ENCODE measurements at regions of chr9 and their contacts with region 1.

Region 1: DNA sequence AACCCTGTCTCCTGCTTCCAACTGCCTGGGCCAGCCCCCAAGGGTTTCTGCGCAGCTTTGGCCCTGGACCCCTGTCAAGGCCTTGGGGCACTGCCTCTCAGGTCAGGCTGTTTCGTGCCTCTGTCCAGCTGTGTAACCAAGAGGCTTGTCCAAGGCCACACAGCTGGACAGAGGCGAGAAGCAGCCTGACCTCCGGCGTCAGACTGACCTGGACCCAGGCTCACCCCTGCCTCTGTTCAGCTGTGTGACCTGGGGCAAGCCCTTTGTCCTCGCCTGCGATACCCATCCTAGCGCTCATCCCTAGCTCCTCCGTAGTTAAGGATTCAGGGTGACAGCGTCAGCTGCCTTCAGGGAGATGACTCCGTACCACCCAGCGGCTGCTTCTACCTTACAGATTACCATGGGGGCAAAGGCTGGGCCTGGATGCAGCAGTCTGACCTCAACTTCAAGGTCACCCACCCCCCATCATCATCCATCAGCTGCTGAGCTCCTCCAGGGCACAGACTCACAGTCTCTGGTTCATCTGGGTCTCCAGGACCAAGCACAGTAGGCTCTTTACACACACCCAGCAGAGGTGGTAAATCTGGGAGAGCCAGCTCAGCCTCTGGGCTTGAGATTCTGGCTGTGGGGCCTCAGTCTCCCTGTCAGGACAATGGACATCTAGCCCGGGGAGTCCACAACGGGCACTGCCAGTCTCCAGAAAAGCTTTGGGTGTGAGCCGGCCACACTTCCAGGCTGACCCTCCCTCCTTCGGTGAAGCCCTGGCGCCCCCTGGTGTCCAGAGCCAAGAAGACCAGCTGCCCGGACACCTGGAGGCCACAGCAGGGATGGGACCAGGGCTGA is 7.9 kb downstream of the AK1 start:
- DNase-seq: peak; percentile 81 to 96
- ATAC-seq: peak; percentile 88 to 97
- H3K4me3 ChIP-seq: no peak overlapping the region
- H3K27ac ChIP-seq: peak overlapping the region in 1 of 2 experiments; percentile 45; a peak in 1 of 6 replicates
- H3K4me1 ChIP-seq: peaks cover 7% of the 10 kb centered on the region
- CTCF ChIP-seq: peak; percentile 82
- EP300 ChIP-seq: no peak
- POLR2A ChIP-seq: no peak
- RAD21 ChIP-seq: peak; percentile 89 to 96

Region 2: DNA sequence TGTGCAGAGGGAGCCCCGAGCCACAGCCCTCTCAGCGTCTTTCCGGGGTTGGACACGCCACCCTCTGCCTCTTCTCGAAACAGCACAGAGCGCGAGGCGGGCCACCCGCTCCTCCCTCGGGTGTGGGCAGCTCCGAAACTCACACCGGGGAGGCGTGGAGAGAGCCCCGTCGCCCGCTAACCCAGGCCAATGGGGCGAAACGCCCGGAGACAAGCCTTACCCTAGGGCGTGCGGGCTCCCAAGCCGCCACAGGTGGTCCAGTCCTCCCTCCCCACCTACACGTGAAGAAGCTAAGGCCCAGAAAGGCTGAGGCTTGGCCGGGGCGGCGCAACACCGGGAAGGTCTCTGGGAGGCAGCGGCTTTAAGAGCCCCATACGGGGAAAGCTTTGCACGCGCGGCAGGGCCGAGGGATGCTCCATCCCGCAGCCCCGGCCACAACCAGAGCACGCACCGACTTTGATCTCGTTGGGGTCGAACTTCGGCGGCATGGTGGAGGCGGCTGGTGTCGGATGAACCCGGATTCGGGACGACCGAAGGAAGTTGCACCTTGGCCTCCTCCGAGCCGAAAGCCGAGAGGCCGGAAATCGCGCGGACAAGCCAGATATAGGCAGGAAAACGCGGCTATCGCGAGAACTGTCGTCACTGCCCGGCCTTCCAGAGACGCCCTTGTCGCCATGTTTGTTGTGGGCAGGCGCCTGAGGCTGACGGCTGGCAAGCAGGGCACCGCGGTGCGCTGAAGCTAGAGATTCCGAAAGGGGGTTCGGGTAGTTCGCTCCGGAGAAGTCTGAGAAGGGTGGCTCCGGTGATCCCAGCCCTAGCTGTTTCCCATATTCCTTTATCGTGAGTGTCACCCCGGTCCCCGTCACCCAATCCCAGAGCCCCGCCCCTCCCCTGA is 418.5 kb before region 1 on chr9 and contains the starts of genes LRSAM1 and RPL12:
- CTCF ChIA-PET with region 1: no interaction called
- POLR2A ChIA-PET with region 1: interaction called, 10 read pairs
- DNase-seq: peak; percentile 96 to 97
- ATAC-seq: peak; percentile 72 to 77
- H3K4me3 ChIP-seq: peak within 1 kb of the TSS; percentile 98
- H3K27ac ChIP-seq: peak within 1 kb of the TSS; percentile 96 to 99
- H3K4me1 ChIP-seq: peaks cover 17% of the 10 kb centered on the region
- CTCF ChIP-seq: no peak
- EP300 ChIP-seq: no peak
- POLR2A ChIP-seq: peak; percentile 99
- RAD21 ChIP-seq: no peak
- polyA plus RNA-seq, gene LRSAM1: 5.1 and 6.4 TPM in 2 replicates
- polyA plus RNA-seq, gene RPL12: 1,891 and 2,198 TPM in 2 replicates

Region 3: DNA sequence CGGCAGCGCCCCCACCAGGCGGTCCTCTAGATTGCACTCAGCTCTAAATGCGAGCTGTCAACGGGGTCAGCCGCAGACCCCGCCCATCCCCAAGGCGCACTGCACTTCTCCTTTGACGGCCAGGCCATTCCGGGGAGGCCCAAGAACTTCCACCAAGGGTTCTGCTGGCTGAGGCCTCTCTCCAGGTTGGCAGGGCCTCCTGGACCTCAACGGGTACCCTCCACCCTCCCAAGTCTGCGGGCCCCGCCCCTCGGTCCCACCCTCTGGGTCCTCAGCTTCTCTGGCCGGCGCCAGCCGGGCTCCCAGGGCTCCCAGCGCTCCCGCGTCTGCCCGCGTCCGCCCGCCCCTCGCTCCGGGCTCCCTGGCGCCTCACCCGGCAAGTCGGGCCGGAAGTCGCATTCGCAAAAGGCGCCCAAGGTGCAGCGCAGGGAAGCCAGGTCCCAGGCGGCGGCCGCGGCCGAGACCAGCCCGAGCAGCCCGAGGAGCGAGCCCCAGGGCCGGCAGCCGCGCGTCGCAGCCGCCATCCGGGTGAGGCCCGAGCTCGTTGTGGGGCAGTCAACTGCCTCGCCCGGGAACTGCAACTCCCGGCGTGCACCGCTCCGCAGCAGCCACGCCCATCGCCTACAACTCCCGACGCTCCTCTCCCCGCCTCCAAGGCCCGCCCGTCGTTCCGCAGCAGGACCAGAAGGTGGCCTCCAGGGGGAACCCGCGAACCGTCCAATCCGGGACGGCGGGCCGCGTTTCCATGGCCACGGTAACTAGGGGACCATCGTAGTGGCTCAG is 134.6 kb before region 1 on chr9 and contains the start of gene TOR2A:
- CTCF ChIA-PET with region 1: interaction called, 117 read pairs
- POLR2A ChIA-PET with region 1: no interaction called
- DNase-seq: peak; percentile 91 to 97
- ATAC-seq: peak; percentile 92 to 95
- H3K4me3 ChIP-seq: peak within 1 kb of the TSS; percentile 72
- H3K27ac ChIP-seq: peak within 1 kb of the TSS; percentile 96
- H3K4me1 ChIP-seq: peaks cover 12% of the 10 kb centered on the region
- CTCF ChIP-seq: peak; percentile 90
- EP300 ChIP-seq: no peak; a peak in 1 of 5 replicates
- POLR2A ChIP-seq: peak; percentile 78
- RAD21 ChIP-seq: peak; percentile 98
- polyA plus RNA-seq, gene TOR2A: 4.9 and 5.5 TPM in 2 replicates

Region 4: GRCh38 chr9:127770905-127771569 is 98.5 kb before region 1 on chr9:
- CTCF ChIA-PET with region 1: interaction called, 20 read pairs
- POLR2A ChIA-PET with region 1: no interaction called
- DNase-seq: peak; percentile 86 to 98
- ATAC-seq: peak; percentile 92 to 98
- H3K4me3 ChIP-seq: peak overlapping the region; percentile 40
- H3K27ac ChIP-seq: peak overlapping the region in 1 of 2 experiments; percentile 54; a peak in 2 of 6 replicates
- H3K4me1 ChIP-seq: peaks cover 4% of the 10 kb centered on the region; the same call in 1 of the 3 replicates
- CTCF ChIP-seq: no peak
- EP300 ChIP-seq: no peak
- POLR2A ChIP-seq: no peak
- RAD21 ChIP-seq: no peak

Region 5: GRCh38 chr9:127817881-127818434 is 51.6 kb before region 1 on chr9:
- CTCF ChIA-PET with region 1: interaction called, 22 read pairs
- POLR2A ChIA-PET with region 1: no interaction called
- DNase-seq: no peak
- ATAC-seq: peak; percentile 9 to 24; a peak in 4 of 6 replicates
- H3K4me3 ChIP-seq: no peak overlapping the region
- H3K27ac ChIP-seq: no peak overlapping the region
- H3K4me1 ChIP-seq: no peaks in the 10 kb centered on the region
- CTCF ChIP-seq: no peak
- EP300 ChIP-seq: no peak
- POLR2A ChIP-seq: no peak
- RAD21 ChIP-seq: no peak

Region 6: GRCh38 chr9:127854184-127854806 is 15.2 kb before region 1 on chr9 and contains the start of gene ENG:
- CTCF ChIA-PET with region 1: interaction called, 63 read pairs
- POLR2A ChIA-PET with region 1: no interaction called
- DNase-seq: no peak
- ATAC-seq: peak; percentile 15 to 46; a peak in 3 of 6 replicates
- H3K4me3 ChIP-seq: no peak within 1 kb of the TSS
- H3K27ac ChIP-seq: no peak within 1 kb of the TSS
- H3K4me1 ChIP-seq: no peaks in the 10 kb centered on the region; the same call in 2 of the 3 replicates
- CTCF ChIP-seq: no peak
- EP300 ChIP-seq: no peak
- POLR2A ChIP-seq: no peak
- RAD21 ChIP-seq: no peak
- polyA plus RNA-seq, gene ENG: not detected in 2 replicates

Region 7: GRCh38 chr9:127910613-127911205 is 41.2 kb after region 1 on chr9:
- CTCF ChIA-PET with region 1: interaction called, 46 read pairs
- POLR2A ChIA-PET with region 1: no interaction called
- DNase-seq: peak in 1 of 2 experiments; percentile 64
- ATAC-seq: peak; percentile 58 to 64
- H3K4me3 ChIP-seq: no peak overlapping the region
- H3K27ac ChIP-seq: 0 out of 6 replicates have a peak overlapping the region, but pooled peaks of 1 of the 2 experiments have one; percentile 51
- H3K4me1 ChIP-seq: peaks cover 22% of the 10 kb centered on the region
- CTCF ChIP-seq: peak; percentile 41
- EP300 ChIP-seq: no peak
- POLR2A ChIP-seq: no peak
- RAD21 ChIP-seq: peak; percentile 54 to 66

Region 8: GRCh38 chr9:127943731-127944144 is 74.2 kb after region 1 on chr9:
- CTCF ChIA-PET with region 1: no interaction called
- POLR2A ChIA-PET with region 1: no interaction called
- DNase-seq: peak; percentile 79 to 86
- ATAC-seq: peak; percentile 70 to 89
- H3K4me3 ChIP-seq: no peak overlapping the region
- H3K27ac ChIP-seq: peak overlapping the region; percentile 34 to 58; a peak in 4 of 6 replicates
- H3K4me1 ChIP-seq: peaks cover 18% of the 10 kb centered on the region; the same call in 2 of the 3 replicates
- CTCF ChIP-seq: peak; percentile 82
- EP300 ChIP-seq: no peak; a peak in 1 of 5 replicates
- POLR2A ChIP-seq: no peak
- RAD21 ChIP-seq: peak; percentile 93 to 95

Region 9: GRCh38 chr9:128150594-128151308 is 281.2 kb after region 1 on chr9:
- CTCF ChIA-PET with region 1: no interaction called
- POLR2A ChIA-PET with region 1: no interaction called
- DNase-seq: peak; percentile 33 to 42
- ATAC-seq: peak; percentile 14 to 73; a peak in 3 of 6 replicates
- H3K4me3 ChIP-seq: no peak overlapping the region
- H3K27ac ChIP-seq: peak overlapping the region; percentile 76 to 82; a peak in 5 of 6 replicates
- H3K4me1 ChIP-seq: peaks cover 31% of the 10 kb centered on the region
- CTCF ChIP-seq: peak; percentile 9; the same call in 1 of the 3 replicates
- EP300 ChIP-seq: no peak
- POLR2A ChIP-seq: no peak
- RAD21 ChIP-seq: no peak